CD8-positive, alpha-beta T cell (primary cell): ENCODE measurements at regions of chr9 and their contacts with region 1.

Region 1: DNA sequence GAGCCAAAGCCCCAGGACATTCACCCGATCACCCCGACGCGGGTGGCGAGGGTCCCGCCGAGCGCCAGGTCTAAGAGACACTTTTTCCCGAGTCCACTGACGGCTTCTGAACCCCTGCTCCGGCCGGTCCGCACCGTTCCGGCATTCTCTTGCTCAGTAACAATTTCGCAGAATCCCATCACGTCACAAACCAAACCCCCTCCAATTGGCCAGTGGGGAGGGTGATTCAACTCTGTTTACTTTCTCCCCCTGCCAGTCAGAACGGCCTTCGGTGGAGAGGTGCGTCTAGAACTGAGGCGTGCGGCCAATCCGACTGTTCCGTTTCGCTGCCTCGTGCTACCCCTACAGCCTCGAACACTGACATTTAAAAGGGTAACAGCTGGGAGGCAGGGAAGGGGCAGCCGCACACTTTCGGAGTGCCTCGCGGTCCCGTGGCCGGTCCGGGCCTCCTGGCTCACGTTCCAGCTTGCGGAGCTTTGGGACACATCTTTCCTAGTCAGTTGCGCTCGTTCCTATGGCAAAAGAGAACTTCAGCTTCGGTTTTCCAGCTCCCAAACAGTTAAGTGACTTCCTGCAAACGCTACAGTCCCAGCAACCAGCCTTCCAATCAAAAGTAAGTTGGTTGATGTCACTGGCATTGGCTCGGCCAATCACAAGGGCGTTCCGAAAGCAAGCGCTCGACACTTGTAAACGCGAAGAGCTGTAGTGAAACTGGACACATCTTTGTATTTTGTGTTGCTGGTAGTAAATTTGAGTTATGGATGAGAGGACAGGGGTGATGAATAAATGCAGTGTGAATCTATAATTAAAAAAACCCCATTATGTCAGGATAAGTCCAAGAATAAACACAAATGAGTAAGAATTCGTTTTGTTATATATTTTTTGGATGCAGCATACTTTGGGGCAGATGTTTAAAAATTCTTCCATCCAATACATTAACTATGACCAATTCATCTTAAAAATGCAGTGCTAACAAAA is at the start of gene KLF9:
- DNase-seq: peak; percentile 80 to 98 (median 90)
- ATAC-seq: peak; percentile 78
- H3K4me3 ChIP-seq: peak within 1 kb of the TSS; percentile 40 to 73
- H3K4me3 Mint-ChIP-seq: peak within 1 kb of the TSS; percentile 99
- H3K27ac ChIP-seq: peak within 1 kb of the TSS; percentile 94 to 99
- H3K27ac Mint-ChIP-seq: peak within 1 kb of the TSS; percentile 100
- H3K4me1 ChIP-seq: peaks cover 39% of the 10 kb centered on the region
- H3K4me1 Mint-ChIP-seq: peaks cover 53% of the 10 kb centered on the region
- H3K27me3 ChIP-seq: no peaks in the 10 kb centered on the region
- H3K27me3 Mint-ChIP-seq: no peaks in the 10 kb centered on the region
- CTCF ChIP-seq: no peak
- total RNA-seq, gene KLF9: 84.0 to 87.1 TPM

Region 2: DNA sequence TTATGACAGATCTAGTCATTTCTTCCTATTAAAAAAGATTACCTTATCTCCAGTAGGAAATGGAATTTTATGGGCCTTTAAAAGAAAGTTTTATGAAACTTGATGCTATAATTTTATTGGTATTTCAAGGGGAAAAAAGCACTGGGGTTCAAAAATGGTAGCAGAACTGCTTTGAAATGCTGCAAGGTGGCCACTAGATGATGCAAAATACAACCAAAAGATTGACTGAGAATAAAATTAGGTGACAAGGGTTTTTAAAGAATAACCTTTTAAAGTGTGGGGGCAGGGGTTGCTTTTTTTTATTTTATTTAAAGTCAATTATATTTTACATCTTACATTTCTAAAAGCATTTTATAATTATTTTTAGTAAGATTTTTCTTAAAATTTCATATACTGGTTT is 61.3 kb before region 1 on chr9:
- CTCF ChIA-PET with region 1: interaction called, 4 read pairs
- POLR2A ChIA-PET with region 1: no interaction called
- intact Hi-C with region 1: loop called (anchors 2 to 5 kb)
- DNase-seq: peak in 2 of 9 experiments; percentile 34 to 53
- ATAC-seq: peak; percentile 36
- H3K4me3 ChIP-seq: no peak overlapping the region
- H3K4me3 Mint-ChIP-seq: no peak overlapping the region
- H3K27ac ChIP-seq: no peak overlapping the region
- H3K27ac Mint-ChIP-seq: no peak overlapping the region
- H3K4me1 ChIP-seq: no peaks in the 10 kb centered on the region
- H3K4me1 Mint-ChIP-seq: peaks cover 2% of the 10 kb centered on the region
- H3K27me3 ChIP-seq: no peaks in the 10 kb centered on the region
- H3K27me3 Mint-ChIP-seq: no peaks in the 10 kb centered on the region
- CTCF ChIP-seq: peak; percentile 75

Region 3: GRCh38 chr9:70398145-70398556 is 15.9 kb before region 1 on chr9:
- CTCF ChIA-PET with region 1: interaction called, 8 read pairs
- POLR2A ChIA-PET with region 1: interaction called, 102 read pairs
- intact Hi-C with region 1: loop called in 1 of 2 experiments (anchors 1 kb)
- DNase-seq: peak in 2 of 9 experiments; percentile 67 to 84
- ATAC-seq: peak; percentile 87
- H3K4me3 ChIP-seq: peak overlapping the region in 1 of 2 experiments; percentile 25
- H3K4me3 Mint-ChIP-seq: peak overlapping the region; percentile 52
- H3K27ac ChIP-seq: peak overlapping the region; percentile 10 to 77
- H3K27ac Mint-ChIP-seq: peak overlapping the region; percentile 82
- H3K4me1 ChIP-seq: peaks cover 62% of the 10 kb centered on the region
- H3K4me1 Mint-ChIP-seq: peaks cover 77% of the 10 kb centered on the region
- H3K27me3 ChIP-seq: no peaks in the 10 kb centered on the region
- H3K27me3 Mint-ChIP-seq: no peaks in the 10 kb centered on the region
- CTCF ChIP-seq: no peak

Region 4: GRCh38 chr9:71897577-71897976 is 1483.5 kb after region 1 on chr9:
- CTCF ChIA-PET with region 1: no interaction called
- POLR2A ChIA-PET with region 1: interaction called, 3 read pairs
- intact Hi-C with region 1: loop called in 1 of 2 experiments (anchors 5 kb)
- DNase-seq: peak in 3 of 9 experiments; percentile 9 to 71 (median 53)
- ATAC-seq: peak; percentile 78
- H3K4me3 ChIP-seq: no peak overlapping the region
- H3K4me3 Mint-ChIP-seq: peak overlapping the region; percentile 35
- H3K27ac ChIP-seq: peak overlapping the region in 1 of 2 experiments; percentile 69
- H3K27ac Mint-ChIP-seq: peak overlapping the region; percentile 19
- H3K4me1 ChIP-seq: peaks cover 54% of the 10 kb centered on the region
- H3K4me1 Mint-ChIP-seq: peaks cover 79% of the 10 kb centered on the region
- H3K27me3 ChIP-seq: no peaks in the 10 kb centered on the region
- H3K27me3 Mint-ChIP-seq: no peaks in the 10 kb centered on the region
- CTCF ChIP-seq: no peak